ENCODE measurements at regions of chr1 and their contacts with region 1.

Region 1: GRCh38 chr1:63199696-63200335 is 122.6 kb upstream of the FOXD3 start:
- H3K4me3 ChIP-seq: no peak overlapping the region
- H3K27ac ChIP-seq: no peak overlapping the region
- H3K4me1 ChIP-seq: no peaks in the 10 kb centered on the region
- CTCF ChIP-seq: no peak

Region 2: DNA sequence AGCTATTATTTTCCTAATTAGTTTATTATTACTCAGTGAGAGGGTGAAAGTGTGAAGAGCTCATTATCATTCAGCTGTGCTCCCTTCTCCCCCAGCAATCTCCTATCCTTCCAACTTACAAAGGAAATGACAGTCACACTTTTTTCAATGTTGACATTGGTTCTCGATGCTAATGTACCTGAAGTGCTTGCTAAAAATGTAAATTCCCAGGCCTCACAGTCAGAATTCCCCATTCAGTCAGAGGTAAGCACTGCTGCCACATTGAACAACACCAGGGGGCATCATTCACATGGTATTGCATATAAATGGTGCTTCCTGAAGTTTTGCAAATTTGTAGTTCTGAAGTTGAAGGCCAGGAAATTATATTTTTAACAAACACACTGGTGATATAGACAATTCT is 10.1 kb before region 1 on chr1:
- CTCF ChIA-PET with region 1: interaction called, 11 read pairs
- POLR2A ChIA-PET with region 1: no interaction called
- H3K4me3 ChIP-seq: no peak overlapping the region
- H3K27ac ChIP-seq: no peak overlapping the region
- H3K4me1 ChIP-seq: no peaks in the 10 kb centered on the region
- CTCF ChIP-seq: no peak

Region 3: GRCh38 chr1:63223426-63223825 is 23.6 kb after region 1 on chr1:
- CTCF ChIA-PET with region 1: no interaction called
- POLR2A ChIA-PET with region 1: no interaction called
- H3K4me3 ChIP-seq: no peak overlapping the region
- H3K27ac ChIP-seq: no peak overlapping the region
- H3K4me1 ChIP-seq: no peaks in the 10 kb centered on the region
- CTCF ChIP-seq: no peak